ENCODE measurements at regions of chr11 and their contacts with region 1.

Region 1: DNA sequence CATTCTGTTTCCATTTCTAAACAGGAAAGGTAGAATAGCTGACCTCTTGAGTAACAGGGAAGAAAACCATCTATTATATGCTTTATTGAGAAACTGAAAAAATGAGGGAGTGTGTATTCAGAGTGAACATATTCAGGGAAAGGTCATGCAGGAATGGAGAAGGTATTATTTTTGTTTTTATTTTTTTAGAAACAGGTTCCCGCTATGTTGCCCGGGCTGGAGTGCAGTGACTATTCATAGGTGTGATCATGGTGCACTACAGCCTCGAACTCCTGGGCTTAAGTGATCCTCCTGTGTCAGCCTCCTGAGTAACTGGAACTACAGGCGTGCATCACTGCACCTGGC is 8.8 kb upstream of the RCE1 start:
- DNase-seq: no peak
- H3K4me3 ChIP-seq: no peak overlapping the region
- H3K27ac ChIP-seq: no peak overlapping the region
- H3K4me1 ChIP-seq: no peaks in the 10 kb centered on the region
- H3K27me3 ChIP-seq: no peaks in the 10 kb centered on the region
- CTCF ChIP-seq: no peak

Region 2: GRCh38 chr11:66694732-66695207 is 139.7 kb before region 1 on chr11:
- intact Hi-C with region 1: loop called (anchors 5 kb)
- DNase-seq: peak; percentile 91 to 96 (median 94)
- H3K4me3 ChIP-seq: no peak overlapping the region
- H3K27ac ChIP-seq: no peak overlapping the region
- H3K4me1 ChIP-seq: no peaks in the 10 kb centered on the region
- H3K27me3 ChIP-seq: no peaks in the 10 kb centered on the region
- CTCF ChIP-seq: peak; percentile 94

Region 3: GRCh38 chr11:67592880-67593564 is 758.5 kb after region 1 on chr11:
- intact Hi-C with region 1: no loop called
- DNase-seq: no peak
- H3K4me3 ChIP-seq: no peak overlapping the region
- H3K27ac ChIP-seq: no peak overlapping the region
- H3K4me1 ChIP-seq: no peaks in the 10 kb centered on the region
- H3K27me3 ChIP-seq: no peaks in the 10 kb centered on the region
- CTCF ChIP-seq: no peak

Measured in kidney (tissue), 22 donors.